ENCODE measurements at regions of chr2 and their contacts with region 1.

Region 1: DNA sequence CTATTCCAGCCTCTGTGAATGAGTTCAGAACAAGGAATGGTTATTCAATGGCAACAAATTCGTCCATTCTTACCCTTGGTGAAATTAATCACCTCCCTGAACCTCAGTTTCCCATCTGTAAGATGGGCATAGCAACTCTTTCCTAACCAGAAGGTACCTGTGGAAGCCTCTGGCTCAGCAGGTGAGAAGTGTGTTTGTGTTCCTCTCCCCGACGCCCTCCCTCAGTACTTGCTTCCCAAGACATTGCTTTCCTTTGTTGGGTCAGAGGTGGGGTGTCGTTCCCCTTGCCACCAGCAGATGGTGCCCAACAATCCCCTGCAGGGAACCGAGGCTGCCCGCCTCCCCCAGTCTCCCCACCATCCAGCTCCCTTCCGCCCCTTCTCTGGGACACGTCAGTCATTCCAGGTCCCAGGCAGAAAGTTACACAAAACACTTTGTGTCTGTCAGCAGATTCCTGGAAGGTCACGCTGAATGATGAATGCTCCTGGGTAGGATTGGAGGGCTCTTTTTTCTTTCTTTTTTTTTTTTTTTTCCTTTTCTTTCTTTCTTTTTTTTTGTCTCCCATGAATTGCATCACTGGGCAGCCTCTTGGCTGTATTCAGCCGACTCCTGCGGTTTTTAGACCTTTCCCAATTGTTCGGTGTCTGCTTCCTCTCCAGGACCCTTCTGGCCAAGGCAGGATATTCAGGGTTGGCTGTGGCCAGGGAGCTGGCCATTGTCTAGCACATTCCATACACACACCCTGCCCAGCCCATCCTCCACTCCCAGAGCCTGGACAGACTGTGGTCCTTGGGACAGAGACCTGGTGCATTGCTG is 117.3 kb downstream of the LPIN1 start:
- DNase-seq: peak; percentile 92
- H3K4me3 ChIP-seq: no peak overlapping the region
- H3K27ac ChIP-seq: peak overlapping the region; percentile 9
- H3K4me1 ChIP-seq: peaks cover 7% of the 10 kb centered on the region
- H3K27me3 ChIP-seq: no peaks in the 10 kb centered on the region
- CTCF ChIP-seq: peak; percentile 97

Region 2: DNA sequence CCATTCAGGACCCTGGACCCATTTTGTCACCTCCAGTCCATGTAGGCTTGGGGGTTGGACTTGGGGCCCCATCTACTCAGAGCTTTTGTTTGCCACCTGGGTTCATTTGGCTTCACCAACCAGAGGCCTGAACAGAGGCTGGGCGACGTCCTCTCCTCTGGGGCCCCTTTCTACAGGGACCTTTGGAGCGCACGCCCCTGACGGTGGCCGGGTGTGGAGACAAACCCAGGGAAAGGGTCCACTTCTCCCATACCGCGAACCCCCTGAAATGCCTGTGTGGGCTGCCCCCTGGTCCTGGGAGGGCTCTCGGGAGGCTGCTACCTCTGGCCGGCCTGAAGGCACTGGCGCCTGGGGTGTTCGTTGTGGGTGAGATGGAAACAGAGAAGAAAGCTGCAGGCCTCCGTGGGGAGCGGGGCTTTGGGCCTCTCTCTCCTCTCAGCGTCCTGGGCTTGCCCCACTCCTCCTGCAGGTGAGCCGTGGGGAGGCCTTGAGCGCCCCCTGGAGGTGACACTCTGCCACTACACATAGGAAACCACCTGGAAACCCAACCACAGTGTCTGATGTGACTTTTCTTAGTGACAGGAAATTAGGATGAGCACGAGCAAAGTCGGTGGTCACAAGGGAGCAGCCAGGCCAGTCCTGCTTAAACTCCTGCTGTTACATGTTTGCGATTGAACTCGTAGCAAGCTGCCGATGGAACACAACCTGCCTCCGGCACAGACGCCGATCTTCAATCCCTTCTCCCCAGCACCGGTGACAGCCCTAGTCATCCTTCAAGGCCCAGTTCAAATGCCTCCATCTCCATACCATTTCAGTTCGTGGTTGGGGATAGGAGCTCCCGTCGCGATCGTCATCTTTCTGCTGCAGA is 181.8 kb before region 1 on chr2:
- CTCF ChIA-PET with region 1: no interaction called
- POLR2A ChIA-PET with region 1: no interaction called
- intact Hi-C with region 1: no loop called
- DNase-seq: peak; percentile 56
- H3K4me3 ChIP-seq: no peak overlapping the region
- H3K27ac ChIP-seq: no peak overlapping the region
- H3K4me1 ChIP-seq: no peaks in the 10 kb centered on the region
- H3K27me3 ChIP-seq: peaks cover 31% of the 10 kb centered on the region
- CTCF ChIP-seq: peak; percentile 97

Region 3: GRCh38 chr2:11930211-11930761 is 66.6 kb after region 1 on chr2:
- CTCF ChIA-PET with region 1: interaction called, 11 read pairs
- POLR2A ChIA-PET with region 1: no interaction called
- intact Hi-C with region 1: no loop called
- DNase-seq: peak; percentile 62
- H3K4me3 ChIP-seq: no peak overlapping the region
- H3K27ac ChIP-seq: peak overlapping the region; percentile 7
- H3K4me1 ChIP-seq: peaks cover 10% of the 10 kb centered on the region
- H3K27me3 ChIP-seq: no peaks in the 10 kb centered on the region
- CTCF ChIP-seq: no peak

Region 4: GRCh38 chr2:11942178-11942569 is 78.5 kb after region 1 on chr2:
- CTCF ChIA-PET with region 1: no interaction called
- POLR2A ChIA-PET with region 1: interaction called, 20 read pairs
- intact Hi-C with region 1: no loop called
- DNase-seq: no peak
- H3K4me3 ChIP-seq: no peak overlapping the region
- H3K27ac ChIP-seq: no peak overlapping the region
- H3K4me1 ChIP-seq: no peaks in the 10 kb centered on the region
- H3K27me3 ChIP-seq: no peaks in the 10 kb centered on the region
- CTCF ChIP-seq: no peak

Region 5: DNA sequence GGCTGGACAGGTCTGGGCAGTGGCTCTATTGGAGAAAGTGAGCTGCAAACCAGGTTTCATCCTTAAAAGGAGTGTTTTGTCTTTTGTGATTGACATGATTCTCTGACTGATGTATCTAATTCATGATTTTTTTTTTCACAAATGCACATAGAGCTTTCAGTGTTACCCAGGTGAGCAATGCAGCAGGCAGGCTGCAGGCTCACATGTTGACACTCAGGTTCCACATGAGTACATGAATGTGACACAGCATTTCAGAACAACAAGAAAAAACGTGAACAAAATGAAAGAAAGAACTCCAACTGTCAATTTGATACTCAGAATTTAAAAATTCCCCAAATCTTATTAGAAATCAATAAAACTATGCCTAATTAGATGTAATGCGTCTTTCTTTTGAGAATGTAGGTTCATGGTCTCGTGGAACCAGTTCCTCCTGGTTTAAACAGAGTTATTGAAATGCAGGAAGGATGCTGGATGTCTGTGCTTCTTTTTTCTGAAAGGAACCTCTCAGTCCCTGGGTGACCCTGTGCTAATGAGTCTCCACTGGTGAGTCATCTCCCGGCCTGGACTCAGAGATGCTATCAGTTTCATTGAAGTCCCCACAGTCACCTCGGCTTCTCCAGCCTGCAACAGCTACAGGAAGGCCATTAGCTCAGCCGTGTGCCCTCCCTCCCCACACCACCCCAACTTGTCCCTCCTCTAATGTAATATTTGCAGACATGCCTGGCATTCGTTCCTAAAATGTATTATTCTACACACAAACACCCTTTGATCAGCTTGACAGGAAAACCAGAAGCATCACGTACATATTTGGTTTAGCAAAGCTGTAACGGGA is 313.1 kb after region 1 on chr2:
- CTCF ChIA-PET with region 1: no interaction called
- POLR2A ChIA-PET with region 1: no interaction called
- intact Hi-C with region 1: loop called (anchors 2 kb)
- DNase-seq: no peak
- H3K4me3 ChIP-seq: no peak overlapping the region
- H3K27ac ChIP-seq: no peak overlapping the region
- H3K4me1 ChIP-seq: no peaks in the 10 kb centered on the region
- H3K27me3 ChIP-seq: no peaks in the 10 kb centered on the region
- CTCF ChIP-seq: no peak

Region 6: GRCh38 chr2:12389344-12390045 is 525.8 kb after region 1 on chr2:
- CTCF ChIA-PET with region 1: no interaction called
- POLR2A ChIA-PET with region 1: no interaction called
- intact Hi-C with region 1: loop called (anchors 10 kb)
- DNase-seq: no peak
- H3K4me3 ChIP-seq: no peak overlapping the region
- H3K27ac ChIP-seq: no peak overlapping the region
- H3K4me1 ChIP-seq: no peaks in the 10 kb centered on the region
- H3K27me3 ChIP-seq: no peaks in the 10 kb centered on the region
- CTCF ChIP-seq: no peak

Region 7: GRCh38 chr2:12465631-12466135 is 602.0 kb after region 1 on chr2:
- CTCF ChIA-PET with region 1: interaction called, 3 read pairs
- POLR2A ChIA-PET with region 1: no interaction called
- intact Hi-C with region 1: loop called (anchors 10 kb)
- DNase-seq: peak; percentile 15
- H3K4me3 ChIP-seq: no peak overlapping the region
- H3K27ac ChIP-seq: peak overlapping the region; percentile 53
- H3K4me1 ChIP-seq: peaks cover 14% of the 10 kb centered on the region
- H3K27me3 ChIP-seq: no peaks in the 10 kb centered on the region
- CTCF ChIP-seq: no peak

Measured in A673 (cell line).